ENCODE measurements at regions of chr5 and their contacts with region 1.

Region 1: DNA sequence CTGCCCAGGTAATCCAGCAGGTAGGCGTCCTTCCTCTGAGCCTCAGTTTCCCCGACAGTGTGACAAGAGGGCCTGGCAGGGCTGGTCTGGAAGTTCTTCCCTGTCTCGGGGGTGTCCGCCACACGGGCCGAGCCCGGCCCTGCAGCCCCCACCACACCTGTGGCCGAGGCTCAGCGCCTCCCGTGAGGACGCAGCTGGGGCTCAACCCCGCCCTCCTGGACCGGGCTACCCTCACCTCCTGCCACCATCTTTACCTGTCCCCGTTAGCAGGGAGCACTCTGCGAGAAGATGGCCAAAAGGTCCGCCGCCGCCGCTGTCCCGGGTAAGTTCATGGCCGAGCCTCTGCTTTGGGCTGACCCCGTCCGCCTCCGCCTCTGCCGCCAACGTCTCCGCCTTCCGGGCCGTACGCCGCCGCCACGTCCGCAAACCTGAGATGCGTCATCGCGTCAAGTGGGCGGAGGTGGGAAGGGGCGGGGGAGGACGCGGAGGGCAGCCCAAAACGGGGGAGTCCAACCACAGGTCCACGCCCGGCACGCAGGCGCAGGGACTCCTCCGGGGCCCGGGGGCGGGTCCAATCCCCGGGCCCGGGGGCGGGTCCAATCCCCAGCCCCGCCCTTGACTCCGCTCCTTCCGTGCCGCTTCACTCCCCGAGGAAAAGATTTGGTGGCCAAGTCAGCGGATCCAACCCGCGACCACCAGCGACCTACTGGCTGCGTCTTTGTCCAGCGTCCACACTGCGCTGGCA is at the start of gene LYSMD3:
- DNase-seq: peak; percentile 95
- ATAC-seq: peak; percentile 99
- H3K4me3 ChIP-seq: peak within 1 kb of the TSS; percentile 98
- H3K27ac ChIP-seq: peak within 1 kb of the TSS; percentile 94
- H3K4me1 ChIP-seq: no peaks in the 10 kb centered on the region
- H3K27me3 ChIP-seq: peaks cover 7% of the 10 kb centered on the region; the same call in 1 of the 2 replicates
- CTCF ChIP-seq: no peak
- POLR2A ChIP-seq: peak; percentile 93
- RAD21 ChIP-seq: no peak
- total RNA-seq, gene LYSMD3: 21.1 and 35.6 TPM in 2 replicates

Region 2: DNA sequence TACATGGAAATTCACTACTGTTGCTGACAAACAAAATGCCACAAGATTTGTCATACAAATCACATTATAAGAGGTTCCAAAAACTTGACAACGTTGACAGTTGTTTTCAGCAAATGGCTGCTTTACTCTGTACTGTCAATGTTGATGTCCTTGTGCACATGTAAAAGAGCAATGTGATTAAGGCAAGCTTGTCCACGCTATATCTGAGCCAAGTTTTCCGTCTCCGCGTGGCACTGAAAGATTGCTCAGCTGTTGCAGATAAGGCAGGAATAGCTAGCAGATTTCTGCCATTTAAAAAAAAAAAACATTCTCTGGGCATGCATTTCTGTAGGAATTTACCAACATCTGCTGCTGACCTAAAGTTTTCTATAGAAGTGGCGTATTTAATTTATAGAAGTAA is 1600.0 kb before region 1 on chr5:
- CTCF ChIA-PET with region 1: no interaction called
- POLR2A ChIA-PET with region 1: interaction called, 10 read pairs
- dilution Hi-C with region 1: no loop called
- in situ Hi-C with region 1: no loop called
- intact Hi-C with region 1: no loop called
- DNase-seq: no peak
- ATAC-seq: no peak
- H3K4me3 ChIP-seq: no peak overlapping the region
- H3K27ac ChIP-seq: no peak overlapping the region
- H3K4me1 ChIP-seq: no peaks in the 10 kb centered on the region
- H3K27me3 ChIP-seq: no peaks in the 10 kb centered on the region
- CTCF ChIP-seq: no peak
- POLR2A ChIP-seq: no peak
- RAD21 ChIP-seq: no peak

Region 3: DNA sequence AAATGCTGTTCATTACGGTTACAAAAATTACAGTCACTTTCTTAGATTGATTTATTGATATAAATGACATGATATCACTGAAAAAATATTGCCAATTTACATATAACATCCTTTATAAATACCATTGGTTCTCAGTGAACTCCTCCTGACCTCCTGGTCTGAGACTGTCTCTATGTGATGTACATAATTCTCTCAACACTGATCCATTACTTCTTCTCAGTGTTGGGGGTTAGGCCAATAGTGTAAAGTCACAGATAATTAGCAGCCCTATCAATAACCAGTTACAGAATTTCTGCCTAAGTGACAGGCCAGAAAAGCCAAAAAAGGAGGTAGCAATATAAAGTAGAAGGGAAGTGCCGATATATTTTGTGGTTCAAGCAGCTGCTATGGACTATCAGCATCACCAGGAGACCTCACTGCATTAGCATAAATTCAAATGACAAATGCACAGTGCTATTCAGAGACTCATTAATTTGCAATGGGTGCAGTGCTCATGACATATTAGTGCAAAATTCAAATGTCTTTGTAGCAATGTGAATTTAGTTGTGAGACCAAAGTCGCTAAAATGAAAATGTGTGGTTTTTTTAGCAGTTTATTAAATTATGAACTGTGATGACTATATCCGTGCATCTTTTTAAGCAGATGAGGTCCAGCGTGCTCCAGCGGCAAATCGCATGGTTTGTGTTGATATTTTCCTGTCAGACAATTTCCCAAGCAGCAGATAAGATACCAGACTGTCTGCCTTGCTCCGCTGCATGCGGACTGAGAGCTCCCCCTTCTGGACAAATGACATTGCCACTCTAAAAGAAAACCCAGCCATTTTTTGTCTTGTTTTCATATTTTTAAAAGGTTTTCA is 264.4 kb before region 1 on chr5:
- CTCF ChIA-PET with region 1: no interaction called
- POLR2A ChIA-PET with region 1: no interaction called
- dilution Hi-C with region 1: no loop called
- in situ Hi-C with region 1: no loop called
- intact Hi-C with region 1: loop called (anchors 1 kb)
- DNase-seq: peak; percentile 61
- ATAC-seq: peak; percentile 83
- H3K4me3 ChIP-seq: no peak overlapping the region
- H3K27ac ChIP-seq: no peak overlapping the region
- H3K4me1 ChIP-seq: no peaks in the 10 kb centered on the region
- H3K27me3 ChIP-seq: no peaks in the 10 kb centered on the region
- CTCF ChIP-seq: peak; percentile 98
- POLR2A ChIP-seq: 0 out of 2 replicates have a peak, but pooled peaks have one; percentile 29
- RAD21 ChIP-seq: peak; percentile 90

Region 4: GRCh38 chr5:90434116-90434714 is 95.2 kb before region 1 on chr5:
- CTCF ChIA-PET with region 1: no interaction called
- POLR2A ChIA-PET with region 1: no interaction called
- dilution Hi-C with region 1: no loop called
- in situ Hi-C with region 1: loop called (anchors 10 kb)
- intact Hi-C with region 1: loop called (anchors 1 kb)
- DNase-seq: peak; percentile 45
- ATAC-seq: peak; percentile 85
- H3K4me3 ChIP-seq: no peak overlapping the region
- H3K27ac ChIP-seq: no peak overlapping the region
- H3K4me1 ChIP-seq: no peaks in the 10 kb centered on the region
- H3K27me3 ChIP-seq: peaks cover 1% of the 10 kb centered on the region
- CTCF ChIP-seq: peak; percentile 65
- POLR2A ChIP-seq: no peak
- RAD21 ChIP-seq: peak; percentile 77

Region 5: DNA sequence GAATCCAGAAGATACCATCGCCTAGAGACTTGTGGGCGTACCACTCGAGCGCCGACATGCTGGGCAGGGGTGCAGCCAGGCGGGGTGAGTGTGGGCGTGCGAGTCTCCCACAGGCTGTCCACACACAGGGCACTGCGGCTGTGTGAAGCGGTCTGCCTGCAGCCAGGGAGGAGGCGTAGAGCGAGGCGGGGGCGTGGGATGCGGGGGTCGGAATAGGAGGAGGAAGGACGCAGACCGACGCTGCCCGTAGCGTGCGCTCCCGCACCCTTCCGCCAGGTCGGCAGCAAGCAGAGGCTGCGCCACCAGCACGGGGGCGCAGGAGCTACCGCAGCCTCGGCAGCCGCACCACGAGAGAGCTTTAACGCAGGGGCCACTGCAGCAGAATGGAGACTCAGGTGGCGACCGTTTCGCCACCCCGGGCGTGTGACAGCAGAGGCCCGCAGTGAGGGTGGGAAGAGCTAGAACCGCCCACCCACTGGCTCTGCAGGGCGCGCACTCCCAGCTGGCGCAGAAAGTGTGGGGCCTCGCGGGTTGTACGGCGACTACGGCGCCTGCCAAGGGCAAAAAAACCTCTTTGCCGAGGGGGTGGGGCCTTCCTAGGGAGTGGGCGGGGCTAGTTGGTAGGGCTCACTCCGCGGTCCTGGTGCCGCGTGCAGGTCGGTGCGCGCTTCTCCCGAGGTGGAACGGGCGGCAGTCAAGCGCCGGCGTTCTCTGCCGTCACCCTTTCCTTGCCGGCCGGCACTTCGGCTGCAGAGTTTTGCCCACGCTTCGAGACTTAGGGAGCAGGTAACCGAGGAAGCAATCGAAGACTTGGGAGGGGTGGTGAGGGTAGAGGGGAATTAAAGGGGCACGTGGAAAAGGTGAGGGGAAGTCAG is 54.9 kb before region 1 on chr5 and contains the starts of genes MBLAC2 and POLR3G:
- CTCF ChIA-PET with region 1: interaction called, 3 read pairs
- POLR2A ChIA-PET with region 1: no interaction called
- dilution Hi-C with region 1: no loop called
- in situ Hi-C with region 1: no loop called
- intact Hi-C with region 1: loop called (anchors 1 kb)
- DNase-seq: peak; percentile 87
- ATAC-seq: peak; percentile 91
- H3K4me3 ChIP-seq: peak within 1 kb of the TSS; percentile 75
- H3K27ac ChIP-seq: peak within 1 kb of the TSS; percentile 59
- H3K4me1 ChIP-seq: peaks cover 2% of the 10 kb centered on the region; the same call in 1 of the 2 replicates
- H3K27me3 ChIP-seq: no peaks in the 10 kb centered on the region
- CTCF ChIP-seq: peak; percentile 41
- POLR2A ChIP-seq: no peak
- RAD21 ChIP-seq: no peak
- total RNA-seq, gene MBLAC2: 3.2 and 5.0 TPM in 2 replicates
- total RNA-seq, gene POLR3G: 10.6 and 15.6 TPM in 2 replicates

Region 6: GRCh38 chr5:90510438-90510837 is 18.9 kb before region 1 on chr5:
- CTCF ChIA-PET with region 1: no interaction called
- POLR2A ChIA-PET with region 1: no interaction called
- dilution Hi-C with region 1: no loop called
- in situ Hi-C with region 1: no loop called
- intact Hi-C with region 1: loop called (anchors 2 kb)
- DNase-seq: no peak
- ATAC-seq: no peak
- H3K4me3 ChIP-seq: no peak overlapping the region
- H3K27ac ChIP-seq: no peak overlapping the region
- H3K4me1 ChIP-seq: peaks cover 2% of the 10 kb centered on the region; the same call in 1 of the 2 replicates
- H3K27me3 ChIP-seq: no peaks in the 10 kb centered on the region
- CTCF ChIP-seq: no peak
- POLR2A ChIP-seq: no peak
- RAD21 ChIP-seq: no peak

Region 7: DNA sequence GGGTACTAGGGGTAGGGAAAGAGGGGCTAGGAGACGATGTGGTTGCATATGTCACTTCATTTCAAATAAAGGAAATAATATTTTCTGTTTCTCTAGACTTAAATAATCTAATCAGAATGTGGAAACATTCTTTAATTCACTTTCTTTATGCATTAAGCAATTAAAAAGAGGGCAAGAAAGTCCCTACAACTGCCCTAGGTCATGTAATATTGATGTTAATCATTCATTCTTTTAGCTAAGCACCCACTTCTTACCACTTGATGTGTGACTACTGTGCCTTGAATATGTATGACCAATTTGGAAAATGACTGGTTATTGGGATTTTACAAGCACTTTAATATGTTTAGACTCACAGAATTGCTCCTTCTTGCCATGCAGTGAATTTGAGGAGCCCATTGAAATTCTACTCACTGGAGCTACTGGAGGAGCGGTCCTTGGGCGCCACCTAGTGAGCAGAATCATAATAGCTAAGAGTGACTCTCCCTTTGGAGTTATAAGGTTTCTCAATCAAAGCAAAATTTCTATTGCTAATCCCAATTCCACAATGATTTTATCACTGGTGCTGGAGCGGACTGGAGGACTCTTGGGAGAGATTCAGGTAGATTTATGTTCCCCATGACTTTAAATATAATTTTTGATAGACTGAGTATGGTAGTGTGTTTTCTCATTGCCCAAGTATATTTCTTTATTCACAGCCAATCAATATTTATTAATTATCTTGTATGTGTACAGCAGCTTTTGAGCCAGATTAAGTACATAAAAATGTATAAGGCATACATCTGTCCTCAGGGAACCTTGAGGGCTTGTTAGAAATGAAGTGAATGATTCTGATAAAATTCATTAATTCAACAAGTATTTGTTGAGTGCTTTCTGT is 254.3 kb after region 1 on chr5:
- CTCF ChIA-PET with region 1: no interaction called
- POLR2A ChIA-PET with region 1: no interaction called
- dilution Hi-C with region 1: no loop called
- in situ Hi-C with region 1: no loop called
- intact Hi-C with region 1: loop called (anchors 2 kb)
- DNase-seq: peak; percentile 51
- ATAC-seq: peak; percentile 95
- H3K4me3 ChIP-seq: no peak overlapping the region
- H3K27ac ChIP-seq: no peak overlapping the region
- H3K4me1 ChIP-seq: no peaks in the 10 kb centered on the region
- H3K27me3 ChIP-seq: no peaks in the 10 kb centered on the region
- CTCF ChIP-seq: peak; percentile 87
- POLR2A ChIP-seq: no peak
- RAD21 ChIP-seq: peak; percentile 86

Region 8: DNA sequence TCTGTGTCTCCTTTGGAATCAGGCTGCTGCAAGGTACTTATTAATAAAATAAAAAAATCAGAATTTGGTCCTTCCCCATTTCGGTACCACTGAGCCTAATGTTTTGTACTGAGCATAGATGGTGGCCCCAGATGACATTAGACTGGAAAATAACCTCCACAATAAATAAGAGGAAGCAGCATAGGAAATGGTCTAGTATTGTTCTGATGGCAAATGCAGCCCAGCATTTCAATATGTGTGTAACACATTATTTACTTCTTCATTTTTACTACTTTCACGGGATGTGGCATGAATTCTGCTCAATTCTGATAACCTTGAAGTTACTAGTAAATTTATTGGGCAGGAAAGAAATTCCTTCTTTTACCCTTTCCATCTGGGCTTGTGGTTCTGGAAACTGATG is 324.8 kb after region 1 on chr5:
- CTCF ChIA-PET with region 1: no interaction called
- POLR2A ChIA-PET with region 1: no interaction called
- dilution Hi-C with region 1: no loop called
- in situ Hi-C with region 1: no loop called
- intact Hi-C with region 1: no loop called
- DNase-seq: no peak
- ATAC-seq: no peak
- H3K4me3 ChIP-seq: no peak overlapping the region
- H3K27ac ChIP-seq: no peak overlapping the region
- H3K4me1 ChIP-seq: no peaks in the 10 kb centered on the region
- H3K27me3 ChIP-seq: no peaks in the 10 kb centered on the region
- CTCF ChIP-seq: no peak
- POLR2A ChIP-seq: no peak
- RAD21 ChIP-seq: no peak

Measured in IMR-90 (cell line).